ENCODE measurements at regions of chr19 and their contacts with region 1.

Region 1: DNA sequence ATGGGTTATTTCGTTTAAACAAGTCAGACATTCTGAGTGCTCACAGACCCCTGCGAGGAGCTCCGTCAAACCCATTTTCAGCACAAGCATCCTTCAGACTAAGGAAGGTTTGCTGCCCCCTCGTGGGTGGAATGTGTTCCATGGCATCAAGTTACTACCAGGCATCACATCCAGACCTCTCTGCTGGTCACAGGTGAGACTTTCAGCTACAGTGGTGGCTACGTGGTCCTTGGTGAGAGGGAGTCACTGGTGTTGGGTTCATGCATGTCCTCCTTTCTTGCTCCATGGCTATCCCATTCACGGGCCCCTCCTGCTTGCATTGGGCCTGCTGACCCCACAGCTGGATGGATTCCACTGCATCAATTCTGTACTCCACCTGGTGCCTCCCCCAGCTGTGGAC is 9.1 kb upstream of the LILRB5 start:
- H3K4me3 Mint-ChIP-seq: peak overlapping the region; percentile 13
- H3K27ac Mint-ChIP-seq: peak overlapping the region; percentile 30
- H3K4me1 Mint-ChIP-seq: peaks cover 25% of the 10 kb centered on the region
- H3K27me3 Mint-ChIP-seq: peaks cover 2% of the 10 kb centered on the region

Region 2: DNA sequence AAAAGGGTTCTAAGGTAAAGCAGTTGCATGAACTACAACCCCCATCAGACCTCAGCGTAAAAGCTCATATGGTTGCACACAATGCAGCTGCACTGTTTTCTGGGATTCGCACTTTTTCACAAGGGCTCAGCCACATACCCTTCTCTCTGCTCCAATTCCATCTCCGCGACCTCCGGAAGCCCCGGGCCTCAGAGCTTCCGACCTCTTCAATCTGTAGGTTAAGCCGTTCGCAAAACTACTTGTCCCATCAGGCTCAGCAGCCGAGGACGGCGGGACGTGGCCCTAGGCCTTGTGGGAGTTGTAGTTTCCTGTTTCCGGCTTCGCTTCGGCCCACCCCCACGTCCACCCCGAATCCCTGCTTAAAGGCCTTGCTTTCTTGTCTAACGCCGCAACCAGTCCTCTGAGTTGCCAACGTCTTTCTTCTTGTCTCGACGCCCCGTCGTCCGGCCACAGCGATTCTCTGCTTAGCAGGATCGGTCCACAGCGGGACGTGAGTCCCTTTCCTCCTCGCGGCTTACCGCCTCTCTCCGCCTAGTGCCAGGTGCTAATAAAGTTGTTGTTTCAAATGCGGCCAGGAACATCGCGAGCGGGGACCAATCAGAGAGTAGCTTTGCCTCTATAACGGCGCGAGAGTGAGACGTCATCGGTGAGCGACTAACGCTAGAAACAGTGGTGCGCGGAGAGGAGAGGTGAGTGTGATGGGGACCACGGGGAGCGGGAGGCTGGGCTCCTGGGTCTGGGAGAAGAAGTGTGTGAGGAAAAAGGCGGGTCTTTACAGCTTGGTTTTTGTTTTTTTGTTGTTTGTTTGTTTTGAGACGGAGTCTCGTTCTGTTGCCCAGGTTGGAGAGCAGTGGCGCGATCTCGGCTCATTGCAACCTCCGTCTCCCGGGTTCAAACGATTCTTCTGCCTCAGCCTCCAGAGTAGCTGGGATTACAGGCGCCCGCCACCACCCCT is 150.7 kb before region 1 on chr19 and contains the starts of genes PRPF31 and TFPT:
- intact Hi-C with region 1: no loop called
- H3K4me3 Mint-ChIP-seq: peak within 1 kb of the TSS; percentile 85
- H3K27ac Mint-ChIP-seq: peak within 1 kb of the TSS; percentile 94
- H3K4me1 Mint-ChIP-seq: peaks cover 48% of the 10 kb centered on the region
- H3K27me3 Mint-ChIP-seq: no peaks in the 10 kb centered on the region

Region 3: GRCh38 chr19:54168174-54168917 is 97.8 kb before region 1 on chr19:
- intact Hi-C with region 1: loop called (anchors 2 kb)
- H3K4me3 Mint-ChIP-seq: peak overlapping the region; percentile 10
- H3K27ac Mint-ChIP-seq: peak overlapping the region; percentile 52
- H3K4me1 Mint-ChIP-seq: peaks cover 50% of the 10 kb centered on the region
- H3K27me3 Mint-ChIP-seq: peaks cover 25% of the 10 kb centered on the region

Region 4: GRCh38 chr19:54209811-54210494 is 56.2 kb before region 1 on chr19:
- intact Hi-C with region 1: loop called (anchors 5 kb)
- H3K4me3 Mint-ChIP-seq: peak overlapping the region; percentile 61
- H3K27ac Mint-ChIP-seq: peak overlapping the region; percentile 94
- H3K4me1 Mint-ChIP-seq: peaks cover 80% of the 10 kb centered on the region
- H3K27me3 Mint-ChIP-seq: no peaks in the 10 kb centered on the region

Region 5: GRCh38 chr19:54231077-54231931 is 34.8 kb before region 1 on chr19:
- intact Hi-C with region 1: no loop called
- H3K4me3 Mint-ChIP-seq: no peak overlapping the region
- H3K27ac Mint-ChIP-seq: no peak overlapping the region
- H3K4me1 Mint-ChIP-seq: peaks cover 10% of the 10 kb centered on the region
- H3K27me3 Mint-ChIP-seq: peaks cover 2% of the 10 kb centered on the region

Region 6: GRCh38 chr19:54316746-54317107 is 50.6 kb after region 1 on chr19:
- intact Hi-C with region 1: loop called (anchors 10 kb)
- H3K4me3 Mint-ChIP-seq: no peak overlapping the region
- H3K27ac Mint-ChIP-seq: peak overlapping the region; percentile 74
- H3K4me1 Mint-ChIP-seq: peaks cover 66% of the 10 kb centered on the region
- H3K27me3 Mint-ChIP-seq: no peaks in the 10 kb centered on the region